Panc1 (cell line): ENCODE measurements at regions of chr7 and their contacts with region 1.

Region 1: DNA sequence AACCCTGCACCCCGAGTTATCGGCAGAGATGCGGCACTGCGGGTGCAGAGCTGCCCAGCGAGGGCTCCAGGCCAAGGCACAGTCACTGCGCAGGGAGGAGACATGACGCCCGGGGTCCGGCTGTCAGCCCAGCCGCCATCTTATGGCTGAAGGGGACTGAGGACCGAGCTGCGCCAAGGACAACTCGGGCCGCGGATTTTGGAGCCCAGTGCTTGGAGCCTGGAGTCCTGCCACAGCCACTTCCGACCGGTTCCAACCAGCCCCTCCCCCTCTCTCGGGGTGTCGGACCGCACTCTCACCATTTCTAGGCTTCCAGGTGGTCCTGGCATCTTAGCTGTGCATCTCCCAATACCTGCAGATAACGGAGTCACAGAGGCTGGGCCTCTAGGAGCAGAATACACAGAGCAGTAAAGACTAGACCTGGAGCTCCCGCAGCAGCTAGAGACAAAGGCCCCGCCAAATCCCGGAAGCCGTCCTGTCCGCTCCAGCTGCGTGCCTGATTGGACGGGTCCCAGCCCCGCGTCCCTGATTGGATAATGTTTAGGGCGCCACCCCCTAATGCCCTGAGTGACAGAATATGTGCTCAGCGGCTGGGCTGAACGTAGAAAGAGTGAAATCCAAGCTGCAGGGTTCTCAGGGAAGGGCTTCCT is at the start of gene ZNF680:
- DNase-seq: peak; percentile 91
- ATAC-seq: peak; percentile 99
- H3K4me3 ChIP-seq: peak within 1 kb of the TSS; percentile 89 to 90
- H3K27ac ChIP-seq: peak within 1 kb of the TSS; percentile 90
- H3K4me1 ChIP-seq: peaks cover 30% of the 10 kb centered on the region
- H3K27me3 ChIP-seq: no peaks in the 10 kb centered on the region
- CTCF ChIP-seq: no peak
- total RNA-seq, gene ZNF680: 21.3 TPM

Region 2: GRCh38 chr7:64313740-64314491 is 248.8 kb before region 1 on chr7 and contains the start of gene ZNF736:
- CTCF ChIA-PET with region 1: no interaction called
- POLR2A ChIA-PET with region 1: interaction called, 6 read pairs
- in situ Hi-C with region 1: no loop called
- intact Hi-C with region 1: loop called (anchors 10 kb)
- DNase-seq: peak; percentile 87
- ATAC-seq: peak; percentile 100
- H3K4me3 ChIP-seq: peak within 1 kb of the TSS; percentile 75 to 95
- H3K27ac ChIP-seq: peak within 1 kb of the TSS; percentile 91
- H3K4me1 ChIP-seq: peaks cover 4% of the 10 kb centered on the region
- H3K27me3 ChIP-seq: no peaks in the 10 kb centered on the region
- CTCF ChIP-seq: no peak
- total RNA-seq, gene ZNF736: 29.0 TPM

Region 3: GRCh38 chr7:64574540-64575126 is 11.9 kb after region 1 on chr7:
- CTCF ChIA-PET with region 1: no interaction called
- POLR2A ChIA-PET with region 1: interaction called, 23 read pairs
- in situ Hi-C with region 1: no loop called
- intact Hi-C with region 1: no loop called
- DNase-seq: peak; percentile 55
- ATAC-seq: peak; percentile 89
- H3K4me3 ChIP-seq: peak overlapping the region; percentile 59 to 75
- H3K27ac ChIP-seq: peak overlapping the region; percentile 70
- H3K4me1 ChIP-seq: no peaks in the 10 kb centered on the region
- H3K27me3 ChIP-seq: no peaks in the 10 kb centered on the region
- CTCF ChIP-seq: no peak